ENCODE measurements at regions of chr14 and their contacts with region 1.

Region 1: DNA sequence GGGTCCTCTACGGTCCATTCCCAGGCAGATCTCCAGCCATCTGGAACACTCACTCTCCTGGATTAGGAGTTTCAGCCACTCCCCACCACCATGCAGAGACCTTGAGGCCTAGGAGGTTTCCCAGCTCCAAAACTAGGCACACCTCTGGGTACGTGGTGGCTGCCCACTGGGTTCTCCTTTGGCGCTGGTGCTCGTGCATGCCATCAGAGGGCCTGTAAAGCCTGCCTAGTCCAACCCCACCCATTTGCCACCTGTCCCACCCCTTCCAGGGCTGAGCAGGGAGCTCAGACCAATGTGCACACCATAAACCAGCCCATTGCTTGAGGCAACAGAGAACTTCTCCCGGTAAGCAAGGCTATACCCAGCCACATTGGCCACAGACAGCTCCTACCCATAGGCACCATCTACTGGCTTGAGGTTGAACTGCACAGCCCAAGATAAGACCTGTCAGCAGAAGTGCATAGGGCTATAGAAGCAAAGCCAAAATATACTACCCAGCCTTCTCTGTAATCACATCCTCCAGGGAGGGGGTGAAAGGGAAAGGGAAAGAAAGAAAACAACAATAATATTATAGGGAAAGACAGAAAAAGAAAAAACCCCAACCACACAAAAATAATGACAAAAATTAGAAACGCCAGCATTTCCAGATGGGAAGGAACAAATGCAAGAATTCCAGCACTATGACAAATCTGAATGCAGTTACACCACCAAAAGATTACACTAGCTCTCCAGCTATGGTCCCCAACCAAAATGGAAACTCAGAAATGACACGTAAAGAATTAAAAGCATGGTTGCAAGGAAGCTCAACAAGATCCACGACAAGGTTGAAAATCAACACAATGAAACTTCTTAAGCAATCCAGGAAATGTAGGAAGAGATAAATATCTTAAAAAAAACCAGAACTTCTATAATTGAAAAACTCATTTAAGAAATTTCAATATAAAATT is 111.9 kb upstream of the CCDC175 start:
- DNase-seq: peak; percentile 20
- H3K4me3 ChIP-seq: no peak overlapping the region
- H3K27ac ChIP-seq: no peak overlapping the region
- H3K27me3 ChIP-seq: peaks cover 3% of the 10 kb centered on the region
- CTCF ChIP-seq: peak; percentile 90

Region 2: GRCh38 chr14:59632381-59632780 is 56.1 kb before region 1 on chr14:
- CTCF ChIA-PET with region 1: interaction called, 43 read pairs
- POLR2A ChIA-PET with region 1: no interaction called
- DNase-seq: no peak
- H3K4me3 ChIP-seq: no peak overlapping the region
- H3K27ac ChIP-seq: no peak overlapping the region
- H3K27me3 ChIP-seq: peaks cover 13% of the 10 kb centered on the region
- CTCF ChIP-seq: peak; percentile 63

Region 3: DNA sequence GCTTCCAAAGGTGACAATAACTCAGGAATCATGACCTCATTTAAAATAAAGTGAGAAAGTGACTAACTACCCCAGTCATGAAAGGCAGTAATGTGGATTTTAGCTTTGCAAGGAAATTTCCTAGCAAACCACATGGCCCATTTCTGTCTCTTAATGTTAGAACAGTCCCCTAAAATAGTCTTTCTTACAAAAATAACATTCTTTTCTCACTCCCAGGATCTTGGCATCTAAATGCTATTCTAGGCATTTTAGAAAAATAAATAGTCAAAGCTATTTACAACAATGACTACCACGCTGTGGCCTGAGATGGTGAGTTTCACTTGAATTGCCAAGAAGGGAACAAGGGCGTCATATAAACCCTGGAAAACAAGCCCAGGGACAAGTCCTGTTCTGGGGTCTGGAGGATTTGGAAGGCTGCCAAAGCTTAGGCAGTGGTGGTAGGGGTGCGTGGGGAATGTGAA is 10.7 kb before region 1 on chr14:
- CTCF ChIA-PET with region 1: interaction called, 10 read pairs
- POLR2A ChIA-PET with region 1: no interaction called
- DNase-seq: peak; percentile 15
- H3K4me3 ChIP-seq: no peak overlapping the region
- H3K27ac ChIP-seq: no peak overlapping the region
- H3K27me3 ChIP-seq: peaks cover 6% of the 10 kb centered on the region
- CTCF ChIP-seq: no peak

Region 4: DNA sequence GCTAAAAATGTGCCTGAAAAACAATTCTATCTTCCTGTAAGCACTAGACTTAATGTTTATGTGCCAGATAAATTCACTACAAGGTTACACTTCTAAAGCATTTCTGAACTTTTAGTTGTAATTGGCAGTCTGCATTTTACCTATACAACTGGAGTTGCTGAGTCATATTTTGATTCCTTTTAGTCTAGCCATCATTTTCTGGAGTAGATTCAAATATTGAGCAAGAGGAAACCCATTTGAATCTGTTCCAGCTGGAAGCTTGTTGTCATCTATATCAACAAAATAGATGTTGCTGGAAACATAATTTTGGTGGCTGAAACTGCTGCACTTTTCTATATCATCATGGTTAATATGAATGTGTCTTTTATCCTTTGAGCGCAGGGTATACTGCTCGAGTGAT is 10.3 kb after region 1 on chr14:
- CTCF ChIA-PET with region 1: interaction called, 22 read pairs
- POLR2A ChIA-PET with region 1: no interaction called
- DNase-seq: no peak
- H3K4me3 ChIP-seq: no peak overlapping the region
- H3K27ac ChIP-seq: no peak overlapping the region
- H3K27me3 ChIP-seq: no peaks in the 10 kb centered on the region
- CTCF ChIP-seq: no peak